Calu3 (cell line): ENCODE measurements at regions of chr20 and their contacts with region 1.

Region 1: DNA sequence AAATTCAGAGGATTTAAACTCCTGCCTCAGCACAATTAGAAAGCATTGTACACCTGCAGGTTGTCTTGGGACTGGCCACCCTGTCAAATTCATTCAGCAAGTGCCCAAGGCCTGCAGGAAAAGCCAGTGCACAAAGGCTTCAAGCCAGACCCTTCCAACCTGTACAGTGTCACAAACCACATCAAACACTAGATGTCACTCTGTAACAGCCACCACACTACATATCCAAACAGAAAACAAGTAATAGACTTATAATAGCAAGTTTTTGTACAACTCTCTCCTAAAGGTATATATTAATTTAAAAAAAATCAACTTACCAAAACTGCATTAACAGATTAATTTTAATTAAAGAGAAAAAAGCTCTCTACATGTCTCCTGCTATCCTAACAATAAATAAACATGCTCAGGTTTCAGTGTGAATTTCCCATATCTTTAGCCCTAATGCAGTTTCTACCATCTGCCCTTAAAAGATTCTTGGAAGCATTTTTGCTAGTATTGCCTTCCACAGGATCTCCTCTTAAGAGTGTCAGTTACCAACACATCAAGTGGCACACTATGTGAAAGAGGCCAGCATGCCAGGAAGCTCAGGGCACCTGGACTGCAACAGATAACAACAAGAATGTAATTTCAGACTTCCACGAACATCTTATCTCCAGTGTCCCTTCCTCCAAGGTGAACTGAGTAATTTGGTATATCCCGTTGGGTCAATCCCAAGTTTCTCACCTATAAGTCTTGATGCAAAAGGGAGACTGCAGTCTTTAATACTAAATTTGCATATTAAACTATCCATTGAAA is 47.5 kb downstream of the RALGAPA2 start:
- DNase-seq: no peak
- H3K4me3 Mint-ChIP-seq: no peak overlapping the region
- H3K27ac Mint-ChIP-seq: no peak overlapping the region
- H3K4me1 Mint-ChIP-seq: peaks cover 8% of the 10 kb centered on the region
- H3K27me3 Mint-ChIP-seq: no peaks in the 10 kb centered on the region
- CTCF ChIP-seq: no peak

Region 2: DNA sequence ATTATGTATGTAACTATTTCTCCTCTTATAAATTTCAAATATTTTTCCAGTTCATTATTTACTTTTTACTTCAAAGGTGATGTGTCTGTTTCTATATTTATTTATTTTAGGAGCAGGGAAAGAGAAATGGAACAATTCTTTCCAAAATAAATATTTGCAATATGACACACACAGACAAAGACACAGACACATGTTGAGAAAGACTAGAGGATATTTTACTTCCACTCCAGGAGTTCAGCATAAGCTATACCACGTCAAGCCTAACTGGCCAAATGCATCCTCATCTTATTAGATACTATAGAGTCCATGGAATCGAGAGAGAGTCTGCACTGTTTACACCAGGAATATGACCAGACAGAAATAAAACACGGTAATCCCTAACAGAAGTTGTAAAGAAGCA is 34.2 kb after region 1 on chr20:
- CTCF ChIA-PET with region 1: no interaction called
- intact Hi-C with region 1: no loop called
- DNase-seq: no peak
- H3K4me3 Mint-ChIP-seq: no peak overlapping the region
- H3K27ac Mint-ChIP-seq: no peak overlapping the region
- H3K4me1 Mint-ChIP-seq: peaks cover 17% of the 10 kb centered on the region
- H3K27me3 Mint-ChIP-seq: no peaks in the 10 kb centered on the region
- CTCF ChIP-seq: no peak

Region 3: DNA sequence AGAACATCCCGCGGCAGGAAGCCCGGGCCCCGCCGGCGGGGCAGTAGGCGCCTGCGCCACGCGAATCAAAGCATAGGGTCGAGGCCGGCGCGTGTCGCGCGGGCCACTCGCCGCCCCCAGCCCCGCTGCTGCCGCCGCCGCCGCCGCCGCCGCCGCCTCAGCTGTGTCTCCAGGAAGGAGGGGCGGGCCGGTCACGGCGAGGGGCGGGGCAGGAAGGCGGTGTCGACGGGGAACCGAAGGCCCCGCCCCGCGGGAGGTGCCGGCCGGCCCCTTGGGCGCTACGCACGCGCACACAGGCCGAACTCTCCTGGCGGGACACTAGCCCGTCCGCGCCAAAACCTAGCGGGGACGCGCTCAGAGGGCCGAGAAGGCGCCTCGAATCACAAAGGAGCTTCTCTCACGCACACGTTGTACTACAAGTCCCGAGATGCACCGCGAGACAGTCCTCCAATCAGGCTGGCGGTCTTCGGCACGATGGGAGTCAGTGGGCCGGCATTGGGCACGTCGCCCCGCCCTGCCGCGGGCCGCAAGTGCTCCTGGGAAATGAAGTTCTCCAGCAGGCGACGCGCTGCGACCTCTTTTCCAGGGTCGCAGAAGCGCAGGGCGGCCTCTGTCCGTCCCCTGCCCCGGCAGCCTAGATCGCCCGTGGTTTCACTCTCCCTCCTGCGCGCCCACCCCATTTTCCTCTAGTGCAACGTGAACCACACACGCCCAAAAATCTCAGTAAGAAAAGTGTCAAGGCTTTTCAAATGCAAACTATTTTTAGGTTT is 47.7 kb after region 1 on chr20 and contains the start of gene RALGAPA2:
- CTCF ChIA-PET with region 1: no interaction called
- intact Hi-C with region 1: loop called (anchors 10 kb)
- DNase-seq: peak; percentile 84
- H3K4me3 Mint-ChIP-seq: peak within 1 kb of the TSS; percentile 74
- H3K27ac Mint-ChIP-seq: peak within 1 kb of the TSS; percentile 58
- H3K4me1 Mint-ChIP-seq: peaks cover 5% of the 10 kb centered on the region
- H3K27me3 Mint-ChIP-seq: no peaks in the 10 kb centered on the region
- CTCF ChIP-seq: no peak
- total RNA-seq, gene RALGAPA2: 26.3 and 28.5 TPM in 2 replicates

Region 4: GRCh38 chr20:20824924-20825584 is 160.1 kb after region 1 on chr20:
- CTCF ChIA-PET with region 1: interaction called, 3 read pairs
- intact Hi-C with region 1: loop called (anchors 2 kb)
- DNase-seq: peak; percentile 35
- H3K4me3 Mint-ChIP-seq: no peak overlapping the region
- H3K27ac Mint-ChIP-seq: no peak overlapping the region
- H3K4me1 Mint-ChIP-seq: no peaks in the 10 kb centered on the region
- H3K27me3 Mint-ChIP-seq: peaks cover 27% of the 10 kb centered on the region
- CTCF ChIP-seq: peak; percentile 32